AG04449 (cell line): ENCODE measurements at regions of chr5 and their contacts with region 1.

Region 1: DNA sequence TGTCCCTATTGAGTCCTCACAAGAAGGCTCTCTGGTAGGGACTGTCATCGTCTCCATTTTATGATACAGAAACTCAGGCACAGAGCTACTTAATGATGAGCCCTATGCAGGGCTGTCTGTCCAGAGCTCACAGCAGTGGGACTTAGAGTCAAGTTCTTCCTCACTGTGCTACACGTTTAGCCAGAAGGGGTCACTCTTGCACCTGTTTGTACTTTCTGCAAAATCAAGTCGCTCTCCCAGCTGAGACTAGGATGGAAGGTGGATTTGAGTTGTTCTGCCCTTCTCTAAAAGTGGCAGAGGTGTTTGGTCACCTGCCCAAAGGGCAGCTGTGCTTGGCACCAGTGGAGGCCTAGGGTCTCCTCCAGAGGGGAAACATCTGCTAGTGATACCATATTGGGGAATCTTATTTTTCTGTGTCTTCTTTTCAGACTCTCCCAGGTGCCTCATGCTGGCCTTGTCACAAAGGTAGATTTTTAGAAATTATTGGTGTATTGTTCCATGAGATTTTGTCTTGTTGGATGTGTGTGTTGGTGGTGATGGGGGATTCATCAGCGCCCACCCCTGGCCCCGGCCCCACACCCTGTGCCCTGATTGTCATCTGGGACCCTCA is 104.2 kb downstream of the PPARGC1B start:
- DNase-seq: peak; percentile 49
- H3K4me3 ChIP-seq: no peak overlapping the region
- CTCF ChIP-seq: peak; percentile 78

Region 2: GRCh38 chr5:149551200-149552037 is 282.9 kb before region 1 on chr5 and contains the start of gene CSNK1A1:
- CTCF ChIA-PET with region 1: no interaction called
- POLR2A ChIA-PET with region 1: no interaction called
- DNase-seq: peak; percentile 82
- H3K4me3 ChIP-seq: peak within 1 kb of the TSS; percentile 95
- CTCF ChIP-seq: peak; percentile 64

Region 3: GRCh38 chr5:149860801-149861322 is 26.5 kb after region 1 on chr5:
- CTCF ChIA-PET with region 1: interaction called, 568 read pairs
- POLR2A ChIA-PET with region 1: no interaction called
- DNase-seq: no peak
- H3K4me3 ChIP-seq: no peak overlapping the region
- CTCF ChIP-seq: no peak

Region 4: GRCh38 chr5:149969181-149969930 is 135.0 kb after region 1 on chr5:
- CTCF ChIA-PET with region 1: interaction called, 429 read pairs
- POLR2A ChIA-PET with region 1: no interaction called
- DNase-seq: no peak
- H3K4me3 ChIP-seq: no peak overlapping the region
- CTCF ChIP-seq: no peak

Region 5: GRCh38 chr5:150000256-150000989 is 166.1 kb after region 1 on chr5 and contains the starts of genes HMGXB3 and TIGD6:
- CTCF ChIA-PET with region 1: interaction called, 48 read pairs
- POLR2A ChIA-PET with region 1: no interaction called
- DNase-seq: peak; percentile 57
- H3K4me3 ChIP-seq: peak within 1 kb of the TSS; percentile 98
- CTCF ChIP-seq: peak; percentile 18

Region 6: GRCh38 chr5:150217873-150218692 is 383.7 kb after region 1 on chr5:
- CTCF ChIA-PET with region 1: interaction called, 99 read pairs
- POLR2A ChIA-PET with region 1: no interaction called
- DNase-seq: peak; percentile 37
- H3K4me3 ChIP-seq: no peak overlapping the region
- CTCF ChIP-seq: peak; percentile 89